Testis (tissue), 5 donors: ENCODE measurements at regions of chr21 and their contacts with region 1.

Region 1: DNA sequence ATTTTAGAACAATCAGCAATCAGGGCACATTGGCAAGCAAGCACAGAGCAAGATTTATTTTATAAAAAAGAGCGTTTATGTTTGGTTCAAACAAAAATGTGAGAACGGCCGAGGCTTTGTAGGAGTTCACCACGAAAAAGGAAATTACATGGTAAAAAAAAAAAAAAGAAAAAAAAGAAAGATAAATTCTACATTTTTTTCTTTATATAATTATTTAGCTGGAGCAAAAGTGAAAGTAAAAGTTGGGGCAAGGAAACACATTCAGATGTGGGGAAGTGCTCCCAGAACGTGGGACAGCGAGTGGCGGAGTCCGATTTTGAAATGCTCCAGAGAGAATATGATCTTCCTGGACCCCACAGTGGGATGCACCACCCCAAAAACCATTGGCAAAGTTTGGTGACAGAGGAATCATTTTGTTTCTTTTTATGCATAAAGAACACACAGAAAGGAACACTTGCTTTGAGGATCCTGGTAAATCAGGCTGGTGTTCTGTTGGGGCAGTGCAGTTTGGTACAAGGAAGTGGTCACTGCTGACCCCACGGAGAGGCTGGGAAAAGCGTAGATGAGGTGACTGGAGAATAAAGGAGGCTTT is 16.3 kb upstream of the ATP5PO start:
- DNase-seq: no peak
- H3K4me3 ChIP-seq: peak overlapping the region; percentile 18 to 30
- H3K27ac ChIP-seq: peak overlapping the region in 1 of 2 donors; percentile 43
- H3K4me1 ChIP-seq: no peaks in the 10 kb centered on the region
- H3K27me3 ChIP-seq: no peaks in the 10 kb centered on the region
- CTCF ChIP-seq: no peak
- POLR2A ChIP-seq: no peak

Region 2: GRCh38 chr21:34345091-34345871 is 413.4 kb after region 1 on chr21:
- intact Hi-C with region 1: loop called (anchors 10 kb)
- DNase-seq: peak; percentile 11
- H3K4me3 ChIP-seq: no peak overlapping the region
- H3K27ac ChIP-seq: peak overlapping the region; percentile 8 to 78
- H3K4me1 ChIP-seq: peaks cover 29% of the 10 kb centered on the region
- H3K27me3 ChIP-seq: no peaks in the 10 kb centered on the region
- CTCF ChIP-seq: no peak
- POLR2A ChIP-seq: no peak